Activated CD4-positive, alpha-beta T cell treated with anti-CD3 and anti-CD28 coated beads, Interleukin-2, amount 10 ng/mL, durations not matched to agents 7 days and 5 days (primary cell): ENCODE measurements at regions of chr13 and their contacts with region 1.

Region 1: GRCh38 chr13:73835138-73835721 is 299.0 kb downstream of the KLF12 start:
- DNase-seq: no peak
- H3K4me3 Mint-ChIP-seq: no peak overlapping the region
- H3K27ac Mint-ChIP-seq: no peak overlapping the region
- H3K4me1 Mint-ChIP-seq: peaks cover 13% of the 10 kb centered on the region
- H3K27me3 Mint-ChIP-seq: no peaks in the 10 kb centered on the region

Region 2: DNA sequence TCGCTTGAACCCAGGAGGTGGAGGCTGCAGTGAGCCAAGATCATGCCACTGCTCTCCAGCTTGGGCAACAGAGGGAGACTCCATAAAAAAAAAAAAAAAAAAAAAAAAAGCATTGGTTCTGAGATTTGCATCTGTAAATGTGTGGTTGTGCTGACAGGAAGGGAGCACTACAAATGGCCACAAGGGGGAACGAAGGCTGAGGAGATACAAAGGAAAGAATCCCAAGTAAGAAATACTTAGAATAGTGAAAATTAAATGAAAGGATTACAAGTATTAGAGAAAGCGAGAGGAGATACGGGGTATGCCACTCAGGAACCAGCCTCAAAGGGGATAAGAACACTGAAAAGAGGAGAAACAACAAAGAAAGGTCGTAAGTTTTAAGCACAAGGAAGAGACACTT is 14.1 kb after region 1 on chr13:
- CTCF ChIA-PET with region 1: interaction called, 13 read pairs
- POLR2A ChIA-PET with region 1: no interaction called
- DNase-seq: peak; percentile 19
- H3K4me3 Mint-ChIP-seq: no peak overlapping the region
- H3K27ac Mint-ChIP-seq: peak overlapping the region; percentile 74
- H3K4me1 Mint-ChIP-seq: peaks cover 8% of the 10 kb centered on the region
- H3K27me3 Mint-ChIP-seq: no peaks in the 10 kb centered on the region